ENCODE measurements at regions of chrX and their contacts with region 1.

Region 1: DNA sequence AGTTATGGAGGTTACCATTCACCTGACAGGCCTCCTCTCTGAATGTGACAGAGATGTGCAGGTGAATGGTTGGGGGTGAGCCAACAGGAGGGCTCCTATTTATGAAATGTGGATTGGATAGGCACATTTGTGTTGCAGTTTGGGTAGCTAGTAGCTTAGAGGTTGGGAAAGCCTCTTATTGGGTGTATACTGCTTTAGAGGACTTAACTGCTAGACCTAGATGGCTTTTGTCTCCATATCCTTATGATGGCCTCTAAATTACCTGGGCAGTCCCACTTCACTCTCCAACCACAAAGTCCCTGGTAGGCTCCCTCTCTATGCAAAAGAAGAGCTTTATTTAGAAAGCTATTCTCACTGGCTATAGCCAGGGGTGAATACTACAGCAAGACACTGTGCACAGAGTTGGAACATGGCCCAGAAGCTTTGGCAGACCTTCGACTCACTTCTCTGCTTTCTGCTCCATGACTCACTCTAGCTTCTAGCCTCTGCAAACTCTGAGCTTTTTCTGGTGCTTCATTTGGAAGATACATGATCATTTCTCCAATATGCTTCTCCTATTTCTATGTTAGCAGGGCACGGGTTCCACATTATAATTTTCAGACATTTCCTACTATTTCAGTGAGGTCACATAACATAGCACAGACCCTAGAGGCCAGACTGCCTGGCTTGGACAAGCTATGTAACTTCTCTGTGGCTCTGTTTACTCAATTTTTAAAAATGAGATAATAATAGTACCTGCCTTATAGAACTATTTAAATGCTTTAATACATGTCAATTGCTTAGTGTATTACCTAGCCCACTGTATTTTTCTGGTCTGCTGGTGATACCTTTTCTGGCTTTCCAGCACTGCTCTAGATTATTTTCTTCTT is 6.0 kb upstream of the VGLL1 start:
- DNase-seq: no peak
- H3K4me3 ChIP-seq: no peak overlapping the region
- H3K27ac ChIP-seq: peak overlapping the region; percentile 45 to 72 (median 59)
- H3K4me1 ChIP-seq: peaks cover 15 to 19% (median 17%) of the 10 kb centered on the region in 4 donors
- H3K27me3 ChIP-seq: no peaks in the 10 kb centered on the region
- CTCF ChIP-seq: no peak
- EP300 ChIP-seq: no peak
- POLR2A ChIP-seq: no peak

Region 2: DNA sequence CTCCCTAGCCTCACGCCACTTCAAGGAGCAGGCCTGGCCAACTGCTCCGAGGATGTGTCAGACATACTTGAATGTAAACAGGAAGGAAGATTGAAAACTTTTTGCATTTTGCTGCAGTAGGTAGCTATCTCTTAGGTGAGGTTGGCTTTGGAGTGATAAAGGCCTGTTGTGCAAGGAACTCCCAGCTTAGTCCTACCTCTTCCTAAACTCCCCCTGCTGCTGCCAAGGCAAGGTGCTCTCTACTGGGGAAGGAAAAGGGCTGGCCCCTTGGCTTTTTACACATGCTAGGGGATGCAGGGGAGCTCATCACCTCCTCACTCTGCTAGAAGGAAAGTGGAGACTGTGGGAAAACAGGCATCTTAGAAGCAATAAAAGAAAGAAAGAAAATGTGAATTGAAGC is 48.9 kb before region 1 on chrX:
- intact Hi-C with region 1: no loop called
- DNase-seq: no peak
- H3K4me3 ChIP-seq: no peak overlapping the region
- H3K27ac ChIP-seq: no peak overlapping the region
- H3K4me1 ChIP-seq: peaks cover 0 to 4% (median 2%) of the 10 kb centered on the region in 4 donors
- H3K27me3 ChIP-seq: no peaks in the 10 kb centered on the region
- CTCF ChIP-seq: no peak
- EP300 ChIP-seq: no peak
- POLR2A ChIP-seq: no peak

Region 3: DNA sequence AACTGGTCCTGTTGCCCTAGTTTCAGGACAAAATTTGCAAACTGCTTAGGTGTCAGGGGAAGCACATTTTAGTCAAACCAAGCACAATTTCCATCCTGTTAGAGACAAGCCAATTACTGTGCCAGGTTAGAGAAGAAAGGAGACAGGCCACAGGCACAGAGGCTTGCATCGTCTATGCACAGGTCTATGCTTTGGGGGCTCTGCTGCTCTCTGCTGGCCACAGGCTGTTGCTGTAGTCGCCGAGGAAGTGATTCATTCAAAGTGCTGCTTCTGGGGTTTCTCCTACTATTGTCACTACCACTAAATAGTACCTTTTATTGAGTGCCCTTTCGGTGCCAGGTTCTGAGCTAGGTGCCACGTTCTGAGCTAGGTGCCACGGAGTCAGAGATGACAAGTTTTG is 51.6 kb after region 1 on chrX:
- intact Hi-C with region 1: loop called (anchors 2 kb)
- DNase-seq: no peak
- H3K4me3 ChIP-seq: no peak overlapping the region
- H3K27ac ChIP-seq: no peak overlapping the region
- H3K4me1 ChIP-seq: peaks cover 0 to 4% (median 0%) of the 10 kb centered on the region in 4 donors
- H3K27me3 ChIP-seq: peaks cover 0 to 7% (median 0%) of the 10 kb centered on the region in 4 donors
- CTCF ChIP-seq: peak; percentile 53 to 63 (median 60)
- EP300 ChIP-seq: no peak
- POLR2A ChIP-seq: no peak